Calu3 (cell line): ENCODE measurements at regions of chr5 and their contacts with region 1.

Region 1: DNA sequence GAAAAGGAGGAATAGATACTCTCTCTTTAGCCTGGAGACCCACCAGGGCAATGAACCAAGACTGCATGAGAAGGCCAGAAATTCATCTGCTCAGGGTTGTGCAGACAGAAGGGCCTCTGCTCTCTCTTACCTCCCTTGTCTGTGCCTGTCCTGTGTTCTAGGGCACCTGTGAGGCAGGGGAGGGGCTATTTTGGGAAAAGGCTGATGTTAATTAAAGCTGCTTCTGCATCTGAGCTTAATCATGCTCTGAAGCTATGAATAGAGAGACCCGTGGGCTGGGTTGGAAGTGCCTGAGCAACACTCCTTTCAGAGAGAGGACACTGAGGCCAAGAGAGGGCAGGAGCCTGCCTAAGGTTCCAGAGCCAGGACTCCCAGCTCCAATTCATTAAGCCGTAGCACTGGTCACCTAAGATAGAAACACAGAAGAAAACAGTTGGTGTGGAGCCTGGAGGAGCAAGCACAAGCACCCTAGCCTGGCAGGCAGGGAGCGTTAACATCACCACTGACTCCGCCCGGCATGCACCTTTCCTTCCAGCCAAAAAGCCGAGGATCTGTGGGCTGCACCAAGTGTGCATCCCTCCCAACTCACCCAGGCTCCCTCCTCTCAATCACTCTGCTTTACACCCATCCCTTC is 31.4 kb upstream of the STING1 start:
- DNase-seq: no peak
- H3K4me3 Mint-ChIP-seq: no peak overlapping the region
- H3K27ac Mint-ChIP-seq: no peak overlapping the region
- H3K4me1 Mint-ChIP-seq: peaks cover 17% of the 10 kb centered on the region
- H3K27me3 Mint-ChIP-seq: no peaks in the 10 kb centered on the region
- CTCF ChIP-seq: no peak

Region 2: DNA sequence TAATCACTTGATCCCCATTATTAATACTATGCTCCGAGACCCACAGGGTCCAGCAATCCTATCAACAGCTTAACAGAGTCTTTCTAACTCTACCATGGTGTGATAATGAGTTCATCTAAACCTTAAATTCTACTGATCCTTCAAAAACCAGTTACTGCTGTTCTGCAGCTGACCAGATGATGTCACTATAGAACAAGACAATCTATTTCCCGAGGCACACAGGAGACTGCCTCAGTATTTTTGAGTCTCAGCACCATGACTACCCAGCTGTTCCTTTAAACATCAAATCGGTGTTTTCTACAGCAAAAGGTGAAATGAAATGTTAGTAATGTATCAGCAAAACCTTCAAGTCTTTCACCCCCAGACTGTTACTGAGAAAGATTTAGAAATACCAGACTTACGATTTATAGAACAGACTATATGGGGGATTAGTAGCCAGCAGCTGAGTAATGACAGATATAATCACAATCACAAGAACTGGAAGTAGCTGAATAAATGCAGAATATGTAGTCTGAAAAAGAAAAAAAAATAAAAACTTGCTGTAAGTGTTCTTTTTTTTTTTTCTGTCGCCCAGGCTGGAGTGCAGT is 91.6 kb before region 1 on chr5:
- CTCF ChIA-PET with region 1: interaction called, 69 read pairs
- intact Hi-C with region 1: loop called (anchors 1 kb)
- DNase-seq: peak; percentile 59
- H3K4me3 Mint-ChIP-seq: no peak overlapping the region
- H3K27ac Mint-ChIP-seq: no peak overlapping the region
- H3K4me1 Mint-ChIP-seq: no peaks in the 10 kb centered on the region
- H3K27me3 Mint-ChIP-seq: no peaks in the 10 kb centered on the region
- CTCF ChIP-seq: peak; percentile 90

Region 3: DNA sequence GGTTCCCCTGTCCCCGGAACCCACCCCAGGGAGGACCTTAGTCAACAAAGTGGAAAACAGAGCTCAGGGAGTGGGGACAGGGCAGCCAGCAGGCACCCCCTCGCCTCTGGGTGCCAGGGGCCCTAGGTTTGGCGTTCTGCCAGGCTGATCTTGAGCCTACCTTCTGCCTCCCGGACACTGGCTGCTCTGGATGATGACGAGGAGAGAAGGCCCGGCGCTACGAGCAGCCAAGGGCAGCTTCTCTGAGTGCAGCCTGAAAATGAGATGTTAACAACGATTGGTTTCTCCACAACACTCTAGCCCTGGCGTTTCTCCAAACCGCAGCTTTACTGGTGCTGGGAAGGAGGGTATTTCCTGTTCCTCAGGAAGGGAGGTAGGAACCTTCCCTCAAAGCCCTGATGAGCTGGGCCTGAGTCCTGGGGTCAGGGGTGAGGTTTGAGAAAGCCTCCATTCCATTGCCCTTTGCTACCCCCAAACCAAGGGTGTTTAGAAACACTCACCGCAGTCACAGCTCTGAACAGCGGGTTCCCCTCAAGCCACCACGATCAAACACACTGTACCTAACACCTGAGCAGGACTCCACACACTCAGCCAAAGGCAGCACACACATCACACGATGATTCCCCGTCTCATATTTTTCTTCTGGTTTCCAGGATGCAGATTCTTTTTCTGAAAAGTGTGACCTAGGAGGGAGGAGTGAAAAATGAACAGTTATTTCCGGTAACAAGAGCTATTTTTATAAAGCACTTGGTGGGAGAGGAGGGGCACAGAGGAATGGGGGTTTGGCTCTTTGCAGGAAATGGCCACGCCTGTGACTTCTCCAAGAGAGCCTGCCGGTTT is 31.7 kb before region 1 on chr5 and contains the start of gene STING1:
- CTCF ChIA-PET with region 1: interaction called, 12 read pairs
- intact Hi-C with region 1: no loop called
- DNase-seq: peak; percentile 89
- H3K4me3 Mint-ChIP-seq: peak within 1 kb of the TSS; percentile 54
- H3K27ac Mint-ChIP-seq: peak within 1 kb of the TSS; percentile 89
- H3K4me1 Mint-ChIP-seq: peaks cover 17% of the 10 kb centered on the region
- H3K27me3 Mint-ChIP-seq: no peaks in the 10 kb centered on the region
- CTCF ChIP-seq: no peak
- total RNA-seq, gene STING1: 34.1 and 79.6 TPM in 2 replicates

Region 4: DNA sequence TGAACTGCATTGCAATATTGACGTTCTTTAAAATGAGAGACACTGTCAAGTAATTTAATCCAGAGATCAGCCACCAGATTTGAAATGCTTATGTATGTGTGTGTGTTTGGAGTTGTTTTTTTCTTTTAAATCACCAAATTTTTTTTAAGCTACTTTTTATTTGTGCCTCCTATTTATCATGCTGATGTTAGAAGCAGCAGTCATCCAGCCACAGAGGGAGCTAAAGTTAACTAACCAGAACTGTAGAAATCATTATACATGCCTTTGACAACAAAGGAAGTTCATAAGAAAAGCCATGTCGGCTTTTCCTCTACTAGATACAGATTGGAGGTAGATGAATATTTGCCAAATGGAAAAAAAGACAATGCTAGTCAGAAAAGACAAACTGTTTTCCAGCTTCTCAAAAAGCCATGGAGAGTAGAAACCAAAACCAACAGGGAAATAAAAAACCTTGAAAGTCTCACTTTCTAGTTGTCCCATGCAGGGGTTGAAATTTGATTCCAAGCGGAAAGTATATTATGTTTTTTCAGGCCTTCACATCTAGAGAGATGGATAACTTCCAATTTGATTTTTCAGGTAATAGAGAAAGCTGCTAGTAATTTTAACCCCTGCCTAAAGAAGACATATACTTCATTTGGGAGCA is 604.4 kb after region 1 on chr5:
- CTCF ChIA-PET with region 1: no interaction called
- intact Hi-C with region 1: no loop called
- DNase-seq: no peak
- H3K4me3 Mint-ChIP-seq: peak overlapping the region; percentile 26
- H3K27ac Mint-ChIP-seq: no peak overlapping the region
- H3K4me1 Mint-ChIP-seq: peaks cover 42% of the 10 kb centered on the region
- H3K27me3 Mint-ChIP-seq: peaks cover 3% of the 10 kb centered on the region
- CTCF ChIP-seq: no peak